Heart left ventricle (tissue), 16 donors: ENCODE measurements at regions of chr12 and their contacts with region 1.

Region 1: GRCh38 chr12:123478762-123479161 is 20.8 kb downstream of the SNRNP35 start:
- DNase-seq: peak; percentile 73 to 88 (median 77)
- ATAC-seq: peak; percentile 86 to 90 (median 88)
- H3K4me3 ChIP-seq: peak overlapping the region in 1 of 12 donors; percentile 32
- H3K27ac ChIP-seq: peak overlapping the region; percentile 71 to 95 (median 86)
- H3K4me1 ChIP-seq: peaks cover 0 to 51% (median 23%) of the 10 kb centered on the region in 12 donors
- H3K27me3 ChIP-seq: no peaks in the 10 kb centered on the region
- CTCF ChIP-seq: no peak
- POLR2A ChIP-seq: no peak

Region 2: DNA sequence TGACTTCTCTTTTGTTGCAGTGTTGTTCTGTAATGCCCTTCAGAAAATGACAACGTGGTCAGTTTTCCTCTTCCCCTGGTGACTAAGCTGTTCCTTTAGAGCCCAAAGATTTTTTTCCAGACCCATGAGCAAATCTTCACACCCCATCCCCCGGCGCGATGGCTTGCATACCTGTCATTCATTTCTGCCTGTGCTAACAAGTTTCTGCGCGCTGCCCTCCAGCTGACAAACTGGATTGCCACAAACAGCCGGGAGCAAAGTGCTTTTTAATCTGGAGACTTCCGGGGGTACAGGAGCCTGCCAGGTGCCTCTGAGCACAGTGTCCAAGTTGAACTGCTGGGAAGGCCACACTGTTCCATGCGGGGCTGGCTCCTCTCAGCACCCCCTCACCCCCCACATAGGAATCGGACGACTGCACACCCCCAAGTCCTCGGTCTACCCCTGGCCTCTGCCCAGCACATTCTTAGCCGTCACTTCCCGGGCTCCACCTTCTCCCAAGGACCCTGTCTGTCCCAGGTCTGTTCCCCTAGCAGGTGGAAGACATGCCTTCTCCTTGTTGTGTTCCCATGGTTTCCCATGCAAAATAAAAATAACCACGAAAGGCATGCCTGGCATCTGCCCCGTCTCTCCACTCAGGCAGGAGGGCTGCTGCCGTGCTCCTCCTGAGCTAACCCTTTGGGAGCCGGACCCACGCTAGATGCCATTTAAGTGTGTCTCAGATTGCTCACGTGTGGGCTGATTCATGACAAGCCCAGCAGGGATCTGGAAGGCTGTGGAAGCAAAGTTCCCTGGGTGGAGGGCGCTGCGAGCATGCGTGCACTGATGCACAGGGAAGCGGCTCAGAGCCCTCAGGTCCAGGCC is 40.6 kb after region 1 on chr12:
- intact Hi-C with region 1: loop called in 5 of 10 experiments (anchors 1 to 5 kb)
- DNase-seq: peak; percentile 63 to 87 (median 75)
- ATAC-seq: peak; percentile 64 to 85 (median 81)
- H3K4me3 ChIP-seq: peak overlapping the region in 2 of 12 donors; percentile 4 to 10
- H3K27ac ChIP-seq: peak overlapping the region; percentile 67 to 96 (median 82)
- H3K4me1 ChIP-seq: peaks cover 0 to 50% (median 12%) of the 10 kb centered on the region in 12 donors
- H3K27me3 ChIP-seq: no peaks in the 10 kb centered on the region
- CTCF ChIP-seq: no peak
- POLR2A ChIP-seq: no peak